HEK293 (cell line): ENCODE measurements at regions of chr9 and their contacts with region 1.

Region 1: GRCh38 chr9:20597862-20598261 is 24.4 kb downstream of the MLLT3 start:
- H3K4me3 ChIP-seq: no peak overlapping the region
- H3K27ac ChIP-seq: no peak overlapping the region
- H3K4me1 ChIP-seq: peaks cover 15% of the 10 kb centered on the region
- CTCF ChIP-seq: no peak

Region 2: GRCh38 chr9:20447291-20447690 is 150.6 kb before region 1 on chr9:
- CTCF ChIA-PET with region 1: no interaction called
- POLR2A ChIA-PET with region 1: no interaction called
- H3K4me3 ChIP-seq: no peak overlapping the region
- H3K27ac ChIP-seq: no peak overlapping the region
- H3K4me1 ChIP-seq: peaks cover 3% of the 10 kb centered on the region; the same call in 1 of the 2 replicates
- CTCF ChIP-seq: no peak

Region 3: GRCh38 chr9:20611751-20612287 is 14.0 kb after region 1 on chr9:
- CTCF ChIA-PET with region 1: interaction called, 14 read pairs
- POLR2A ChIA-PET with region 1: no interaction called
- H3K4me3 ChIP-seq: no peak overlapping the region
- H3K27ac ChIP-seq: peak overlapping the region; percentile 38; the same call in 1 of the 2 replicates
- H3K4me1 ChIP-seq: peaks cover 43% of the 10 kb centered on the region
- CTCF ChIP-seq: no peak